ENCODE measurements at regions of chr4 and their contacts with region 1.

Region 1: DNA sequence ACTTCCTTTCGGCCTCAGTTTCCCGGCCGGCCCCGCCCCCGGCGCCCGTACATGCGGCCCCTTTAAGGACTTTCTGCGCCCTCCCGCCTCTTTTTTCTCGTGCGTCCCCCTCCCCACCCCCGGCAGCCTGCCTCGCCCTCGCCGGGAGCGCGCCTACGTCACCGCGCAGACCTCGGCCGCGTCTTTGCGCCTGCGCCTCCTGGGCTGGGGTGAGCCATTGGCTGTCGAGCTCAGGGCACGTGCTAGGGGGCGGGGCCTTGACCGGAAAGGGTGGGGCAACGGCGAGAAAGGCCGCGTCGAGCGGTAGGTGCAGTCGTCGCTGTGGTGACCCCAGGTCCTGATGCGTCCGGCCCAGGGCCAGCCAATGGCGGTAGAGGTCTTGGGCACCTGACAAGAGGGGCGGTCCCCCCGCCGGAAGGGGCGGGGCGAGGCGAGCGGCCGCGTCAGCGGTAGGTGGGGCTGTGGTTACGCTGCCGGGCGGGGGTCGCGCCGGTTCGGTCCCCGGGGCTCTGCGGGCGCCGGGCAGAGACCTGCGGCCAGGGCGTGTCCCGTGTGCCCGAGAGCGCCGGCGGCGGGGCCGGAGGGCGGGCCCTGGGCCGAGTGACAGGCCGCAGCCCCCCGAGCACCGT is at the start of gene UVSSA:
- H3K4me3 Mint-ChIP-seq: peak within 1 kb of the TSS; percentile 79
- H3K27ac Mint-ChIP-seq: peak within 1 kb of the TSS; percentile 91
- H3K4me1 Mint-ChIP-seq: peaks cover 50% of the 10 kb centered on the region
- H3K27me3 Mint-ChIP-seq: no peaks in the 10 kb centered on the region

Region 2: GRCh38 chr4:1289207-1290164 is 57.4 kb before region 1 on chr4 and contains the start of gene MAEA:
- intact Hi-C with region 1: loop called (anchors 1 kb)
- H3K4me3 Mint-ChIP-seq: peak within 1 kb of the TSS; percentile 91
- H3K27ac Mint-ChIP-seq: peak within 1 kb of the TSS; percentile 88
- H3K4me1 Mint-ChIP-seq: peaks cover 38% of the 10 kb centered on the region
- H3K27me3 Mint-ChIP-seq: peaks cover 1% of the 10 kb centered on the region

Region 3: GRCh38 chr4:1381944-1382541 is 35.1 kb after region 1 on chr4:
- intact Hi-C with region 1: no loop called
- H3K4me3 Mint-ChIP-seq: no peak overlapping the region
- H3K27ac Mint-ChIP-seq: no peak overlapping the region
- H3K4me1 Mint-ChIP-seq: no peaks in the 10 kb centered on the region
- H3K27me3 Mint-ChIP-seq: no peaks in the 10 kb centered on the region

Region 4: GRCh38 chr4:1721004-1721665 is 374.2 kb after region 1 on chr4 and contains the starts of genes TACC3 and TMEM129:
- intact Hi-C with region 1: loop called (anchors 10 kb)
- H3K4me3 Mint-ChIP-seq: peak within 1 kb of the TSS; percentile 96
- H3K27ac Mint-ChIP-seq: peak within 1 kb of the TSS; percentile 97
- H3K4me1 Mint-ChIP-seq: peaks cover 84% of the 10 kb centered on the region
- H3K27me3 Mint-ChIP-seq: no peaks in the 10 kb centered on the region

Region 5: DNA sequence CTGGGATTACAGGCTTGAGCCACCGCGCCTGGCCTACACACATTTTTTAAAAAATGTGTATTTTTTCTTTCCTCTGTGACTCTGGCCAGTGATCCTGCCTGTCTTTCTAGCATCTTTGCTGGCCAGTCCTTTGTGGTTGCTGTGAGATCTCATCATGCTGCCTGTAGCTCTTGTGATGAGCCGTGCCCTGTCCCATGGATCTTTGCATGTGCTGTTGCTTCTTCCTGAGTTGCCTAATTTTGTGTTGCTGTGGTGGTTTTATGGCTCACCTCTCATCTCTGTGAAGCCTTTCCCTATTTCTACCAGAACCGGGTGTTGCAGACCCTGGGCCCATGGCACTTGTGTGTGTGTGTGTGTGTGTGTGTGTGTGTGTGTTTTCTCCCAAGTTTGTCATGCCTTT is 532.6 kb after region 1 on chr4:
- intact Hi-C with region 1: no loop called
- H3K4me3 Mint-ChIP-seq: no peak overlapping the region
- H3K27ac Mint-ChIP-seq: peak overlapping the region; percentile 16
- H3K4me1 Mint-ChIP-seq: peaks cover 51% of the 10 kb centered on the region
- H3K27me3 Mint-ChIP-seq: no peaks in the 10 kb centered on the region

Measured in dendritic cell treated with granulocyte-macrophage colony-stimulating factor and Interleukin-4, amounts not matched to agents 40 ng/mL and 50 ng/mL, for 4 days (primary cell).